CD8-positive, alpha-beta T cell (primary cell): ENCODE measurements at regions of chr10 and their contacts with region 1.

Region 1: DNA sequence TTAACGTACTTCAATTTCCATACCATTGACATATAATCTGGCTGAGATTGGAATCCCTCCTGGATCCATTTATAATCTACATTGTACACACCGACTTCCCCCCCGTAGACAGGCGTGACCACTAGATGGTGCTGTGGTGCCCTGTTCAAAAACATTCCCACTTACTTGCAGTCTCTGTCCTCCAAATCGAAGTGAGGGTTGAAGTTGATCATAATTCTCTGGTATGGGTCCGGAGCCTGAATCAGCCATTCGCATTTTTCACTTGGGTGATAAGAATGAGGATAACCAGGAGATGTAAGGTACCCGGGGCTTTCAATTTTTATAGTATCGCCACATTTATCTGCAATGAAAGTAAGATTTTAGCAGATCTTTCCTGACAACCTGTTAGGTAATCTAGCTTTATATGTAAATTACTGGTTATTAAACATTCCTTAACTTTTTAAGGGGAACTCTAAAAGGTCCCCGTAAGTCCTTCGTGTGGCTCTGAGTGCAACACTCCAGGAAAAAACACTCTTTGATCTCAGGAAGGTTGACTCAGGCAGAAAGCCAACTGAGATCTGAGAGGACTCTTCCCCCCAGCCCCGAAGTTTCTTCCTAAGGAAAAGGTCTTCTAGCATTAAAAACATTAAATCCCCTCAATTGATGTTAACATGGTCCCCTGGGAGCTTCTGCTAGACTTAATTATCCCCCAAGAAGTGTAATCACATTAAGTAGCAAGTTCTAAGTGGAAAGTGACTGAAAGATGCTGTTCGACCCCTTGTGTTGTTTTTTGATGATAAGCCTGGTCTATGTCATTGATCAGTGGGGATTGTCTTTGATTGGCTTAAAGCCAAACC is 3.7 kb downstream of the NRP1 start:
- DNase-seq: peak; percentile 48 to 85 (median 74)
- ATAC-seq: peak; percentile 56
- H3K4me3 ChIP-seq: no peak overlapping the region
- H3K4me3 Mint-ChIP-seq: no peak overlapping the region
- H3K27ac ChIP-seq: no peak overlapping the region
- H3K27ac Mint-ChIP-seq: no peak overlapping the region
- H3K4me1 ChIP-seq: peaks cover 15% of the 10 kb centered on the region
- H3K4me1 Mint-ChIP-seq: peaks cover 18% of the 10 kb centered on the region
- H3K27me3 ChIP-seq: peaks cover 16 to 17% of the 10 kb centered on the region in 2 experiments
- H3K27me3 Mint-ChIP-seq: peaks cover 47% of the 10 kb centered on the region
- CTCF ChIP-seq: peak; percentile 96

Region 2: GRCh38 chr10:33341637-33342036 is 10.9 kb after region 1 on chr10:
- CTCF ChIA-PET with region 1: interaction called, 40 read pairs
- POLR2A ChIA-PET with region 1: no interaction called
- intact Hi-C with region 1: no loop called
- DNase-seq: no peak
- ATAC-seq: no peak
- H3K4me3 ChIP-seq: no peak overlapping the region
- H3K4me3 Mint-ChIP-seq: no peak overlapping the region
- H3K27ac ChIP-seq: no peak overlapping the region
- H3K27ac Mint-ChIP-seq: no peak overlapping the region
- H3K4me1 ChIP-seq: no peaks in the 10 kb centered on the region
- H3K4me1 Mint-ChIP-seq: peaks cover 11% of the 10 kb centered on the region
- H3K27me3 ChIP-seq: no peaks in the 10 kb centered on the region
- H3K27me3 Mint-ChIP-seq: peaks cover 35% of the 10 kb centered on the region
- CTCF ChIP-seq: no peak

Region 3: GRCh38 chr10:33350041-33350440 is 19.3 kb after region 1 on chr10:
- CTCF ChIA-PET with region 1: interaction called, 40 read pairs
- POLR2A ChIA-PET with region 1: no interaction called
- intact Hi-C with region 1: loop called in 1 of 2 experiments (anchors 2 kb)
- DNase-seq: no peak
- ATAC-seq: no peak
- H3K4me3 ChIP-seq: no peak overlapping the region
- H3K4me3 Mint-ChIP-seq: no peak overlapping the region
- H3K27ac ChIP-seq: no peak overlapping the region
- H3K27ac Mint-ChIP-seq: no peak overlapping the region
- H3K4me1 ChIP-seq: no peaks in the 10 kb centered on the region
- H3K4me1 Mint-ChIP-seq: no peaks in the 10 kb centered on the region
- H3K27me3 ChIP-seq: no peaks in the 10 kb centered on the region
- H3K27me3 Mint-ChIP-seq: peaks cover 12% of the 10 kb centered on the region
- CTCF ChIP-seq: no peak